HCT116 (cell line): ENCODE measurements at regions of chr2 and their contacts with region 1.

Region 1: GRCh38 chr2:57084697-57085281 is 901.0 kb downstream of the CCDC85A start:
- DNase-seq: no peak
- ATAC-seq: no peak
- H3K4me3 ChIP-seq: no peak overlapping the region
- H3K27ac ChIP-seq: no peak overlapping the region
- H3K4me1 ChIP-seq: peaks cover 0 to 9% of the 10 kb centered on the region in 2 experiments; a peak in 2 of 4 replicates
- H3K27me3 ChIP-seq: no peaks in the 10 kb centered on the region
- CTCF ChIP-seq: no peak
- POLR2A ChIP-seq: no peak
- RAD21 ChIP-seq: no peak

Region 2: GRCh38 chr2:57105694-57106093 is 20.9 kb after region 1 on chr2:
- CTCF ChIA-PET with region 1: no interaction called
- POLR2A ChIA-PET with region 1: no interaction called
- RAD21 ChIA-PET with region 1: no interaction called
- intact Hi-C with region 1: loop called (anchors 2 kb)
- DNase-seq: no peak
- ATAC-seq: no peak
- H3K4me3 ChIP-seq: no peak overlapping the region
- H3K27ac ChIP-seq: no peak overlapping the region
- H3K4me1 ChIP-seq: no peaks in the 10 kb centered on the region
- H3K27me3 ChIP-seq: no peaks in the 10 kb centered on the region
- CTCF ChIP-seq: no peak
- POLR2A ChIP-seq: no peak
- RAD21 ChIP-seq: no peak